ENCODE measurements at regions of chr13 and their contacts with region 1.

Region 1: GRCh38 chr13:30679483-30680330 is 55.6 kb upstream of the ALOX5AP start:
- DNase-seq: no peak
- ATAC-seq: peak; percentile 77

Region 2: GRCh38 chr13:30466841-30467252 is 212.9 kb before region 1 on chr13:
- intact Hi-C with region 1: no loop called
- DNase-seq: no peak
- ATAC-seq: no peak

Region 3: DNA sequence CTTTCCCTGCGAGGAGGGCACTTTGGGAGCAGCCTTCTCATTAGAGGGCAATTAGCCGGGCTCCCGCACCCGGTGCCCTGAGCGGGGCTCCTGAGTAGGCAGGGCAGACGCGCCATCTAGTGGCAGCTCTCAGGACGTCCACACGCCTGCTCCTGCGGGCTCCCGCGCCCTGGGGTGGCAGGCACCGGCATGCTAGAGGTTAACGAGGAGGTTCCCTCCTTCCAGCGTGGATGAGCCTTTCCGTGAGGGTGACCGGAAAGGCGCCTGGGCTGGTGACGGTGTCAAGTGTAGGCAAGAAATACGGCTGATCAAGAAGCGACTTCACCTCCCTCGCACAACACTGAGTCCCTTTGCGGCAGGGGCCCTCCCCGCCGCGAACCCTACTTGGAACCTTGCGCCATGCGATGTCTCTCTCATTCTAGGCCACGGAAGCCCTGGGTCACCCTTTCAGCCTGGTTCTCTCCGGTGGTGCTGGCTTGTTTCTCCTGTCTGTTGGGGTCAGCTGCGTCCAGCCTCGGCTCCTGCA is 123.3 kb after region 1 on chr13:
- intact Hi-C with region 1: loop called (anchors 5 kb)
- DNase-seq: peak; percentile 93
- ATAC-seq: peak; percentile 98